ENCODE measurements at regions of chr13 and their contacts with region 1.

Region 1: DNA sequence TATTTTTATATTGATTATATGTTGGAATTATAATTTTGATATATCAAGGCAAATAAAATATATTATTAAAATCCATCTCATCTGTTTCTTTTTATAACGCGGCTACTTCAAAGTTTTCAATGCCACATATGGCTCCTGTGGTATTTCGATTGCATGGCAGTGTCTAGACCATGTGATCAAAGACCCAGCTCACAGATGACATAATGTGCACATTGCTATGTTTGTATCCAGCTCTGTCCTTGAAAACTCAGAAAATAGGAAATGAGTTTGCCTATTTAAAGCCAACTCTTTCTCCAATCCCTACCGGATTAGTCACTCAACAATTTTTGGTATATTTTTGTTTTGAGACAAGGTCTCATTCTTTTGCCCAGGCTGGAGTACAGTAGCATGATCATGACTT is 26.2 kb downstream of the TMTC4 start:
- DNase-seq: no peak
- ATAC-seq: no peak
- H3K4me3 ChIP-seq: no peak overlapping the region
- H3K27ac ChIP-seq: no peak overlapping the region
- H3K4me1 ChIP-seq: peaks cover 8% of the 10 kb centered on the region
- H3K27me3 ChIP-seq: no peaks in the 10 kb centered on the region
- CTCF ChIP-seq: no peak

Region 2: GRCh38 chr13:100673713-100674415 is 25.5 kb after region 1 on chr13:
- intact Hi-C with region 1: loop called in 1 of 2 experiments (anchors 2 kb)
- DNase-seq: peak; percentile 58 to 81
- ATAC-seq: peak; percentile 6 to 44 (median 40)
- H3K4me3 ChIP-seq: peak overlapping the region; percentile 69
- H3K27ac ChIP-seq: peak overlapping the region; percentile 84
- H3K4me1 ChIP-seq: peaks cover 5% of the 10 kb centered on the region
- H3K27me3 ChIP-seq: no peaks in the 10 kb centered on the region
- CTCF ChIP-seq: no peak